HepG2 (cell line): ENCODE measurements at regions of chr14 and their contacts with region 1.

Region 1: GRCh38 chr14:102539580-102540314 is 30.2 kb upstream of the ANKRD9 start:
- DNase-seq: peak; percentile 86
- ATAC-seq: peak; percentile 42
- H3K4me3 ChIP-seq: peak overlapping the region; percentile 60 to 80 (median 78)
- H3K27ac ChIP-seq: peak overlapping the region; percentile 93
- H3K4me1 ChIP-seq: peaks cover 82% of the 10 kb centered on the region
- H3K27me3 ChIP-seq: no peaks in the 10 kb centered on the region; a peak in 1 of 5 replicates
- CTCF ChIP-seq: 0 out of 2 replicates have a peak, but pooled peaks have one; percentile 2
- EP300 ChIP-seq: no peak
- POLR2A ChIP-seq: peak; percentile 73 to 81
- RAD21 ChIP-seq: no peak

Region 2: DNA sequence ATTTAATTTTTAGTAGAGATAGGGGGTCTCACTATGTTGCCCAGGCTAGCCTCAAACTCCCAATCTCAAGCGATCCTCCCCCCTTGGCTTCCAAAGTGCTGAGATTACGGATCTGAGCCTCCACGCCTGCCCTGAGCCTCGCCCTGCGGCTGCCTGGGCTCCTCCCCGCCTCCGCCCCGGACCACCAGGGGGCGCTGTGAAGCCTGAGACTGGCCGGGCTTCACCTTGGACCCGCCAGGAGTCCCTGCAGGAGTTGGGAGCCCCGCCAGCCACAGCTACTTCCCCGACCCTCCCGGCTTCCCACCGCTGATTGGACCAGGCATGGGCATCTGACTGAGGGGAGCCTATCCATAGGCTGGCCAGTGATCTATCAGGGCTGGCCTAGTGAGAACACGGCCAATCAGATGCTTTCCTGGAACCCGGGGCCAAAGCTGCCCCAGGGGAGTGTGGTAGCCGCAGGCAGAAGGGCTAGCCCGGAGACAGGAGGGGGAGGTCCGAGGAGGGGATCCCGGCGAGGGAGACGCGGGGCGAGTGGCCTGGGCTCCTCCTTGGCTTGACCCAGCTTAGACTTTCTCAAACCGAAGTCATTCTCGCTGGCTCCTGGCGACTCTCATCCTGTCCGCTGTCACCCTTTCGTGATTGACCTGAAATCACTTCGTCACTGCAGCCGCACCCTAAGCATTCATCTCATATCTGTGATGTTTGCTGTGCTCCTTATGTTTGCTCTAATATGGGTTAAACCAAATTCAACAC is 15.1 kb before region 1 on chr14:
- CTCF ChIA-PET with region 1: no interaction called
- POLR2A ChIA-PET with region 1: interaction called, 102 read pairs
- in situ Hi-C with region 1: no loop called
- intact Hi-C with region 1: no loop called
- DNase-seq: peak; percentile 96
- ATAC-seq: peak; percentile 99
- H3K4me3 ChIP-seq: peak overlapping the region; percentile 72 to 81 (median 75)
- H3K27ac ChIP-seq: peak overlapping the region; percentile 57
- H3K4me1 ChIP-seq: peaks cover 38% of the 10 kb centered on the region
- H3K27me3 ChIP-seq: no peaks in the 10 kb centered on the region; a peak in 1 of 5 replicates
- CTCF ChIP-seq: peak; percentile 99
- EP300 ChIP-seq: no peak
- POLR2A ChIP-seq: peak; percentile 79 to 97
- RAD21 ChIP-seq: peak; percentile 98

Region 3: GRCh38 chr14:102557434-102558226 is 17.9 kb after region 1 on chr14:
- CTCF ChIA-PET with region 1: no interaction called
- POLR2A ChIA-PET with region 1: interaction called, 16 read pairs
- in situ Hi-C with region 1: no loop called
- intact Hi-C with region 1: no loop called
- DNase-seq: no peak
- ATAC-seq: peak; percentile 6; the same call in 1 of the 3 replicates
- H3K4me3 ChIP-seq: no peak overlapping the region
- H3K27ac ChIP-seq: no peak overlapping the region
- H3K4me1 ChIP-seq: peaks cover 21% of the 10 kb centered on the region
- H3K27me3 ChIP-seq: no peaks in the 10 kb centered on the region; a peak in 1 of 5 replicates
- CTCF ChIP-seq: no peak
- EP300 ChIP-seq: no peak
- POLR2A ChIP-seq: no peak
- RAD21 ChIP-seq: no peak

Region 4: DNA sequence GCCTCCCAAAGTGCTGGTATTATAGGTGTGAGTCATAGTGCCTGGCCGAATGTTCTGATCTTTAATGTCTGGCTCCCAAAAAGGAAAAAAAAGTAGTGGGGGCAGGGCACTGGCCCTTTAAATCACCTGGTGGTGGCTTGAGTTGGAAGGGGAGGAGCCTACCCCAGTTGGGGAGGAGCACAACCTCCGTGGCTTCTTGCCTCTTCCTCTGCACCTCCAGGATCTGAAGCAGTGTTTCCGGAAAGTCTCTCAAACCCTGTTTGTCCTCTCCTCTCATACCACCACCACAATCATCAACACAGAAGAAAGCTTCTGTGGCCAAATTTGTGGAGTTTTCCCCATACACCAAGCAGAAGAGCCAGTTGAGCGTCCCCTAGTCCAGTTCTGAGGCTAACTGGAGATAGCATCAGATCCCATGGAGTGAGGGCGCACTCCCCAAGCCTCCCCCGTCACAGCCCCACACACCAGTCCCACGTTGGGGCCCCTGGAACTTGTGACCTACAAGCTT is 28.4 kb after region 1 on chr14:
- CTCF ChIA-PET with region 1: no interaction called
- POLR2A ChIA-PET with region 1: interaction called, 26 read pairs
- in situ Hi-C with region 1: no loop called
- intact Hi-C with region 1: no loop called
- DNase-seq: peak; percentile 52
- ATAC-seq: peak; percentile 74
- H3K4me3 ChIP-seq: peak overlapping the region; percentile 28 to 52 (median 51); a peak in 5 of 6 replicates
- H3K27ac ChIP-seq: peak overlapping the region; percentile 58
- H3K4me1 ChIP-seq: peaks cover 76% of the 10 kb centered on the region
- H3K27me3 ChIP-seq: no peaks in the 10 kb centered on the region
- CTCF ChIP-seq: no peak
- EP300 ChIP-seq: 0 out of 4 replicates have a peak, but pooled peaks of 1 of the 2 experiments have one; percentile 14
- POLR2A ChIP-seq: peak; percentile 37 to 72; a peak in 2 of 4 replicates
- RAD21 ChIP-seq: no peak

Region 5: GRCh38 chr14:102573591-102574046 is 33.9 kb after region 1 on chr14:
- CTCF ChIA-PET with region 1: no interaction called
- POLR2A ChIA-PET with region 1: interaction called, 66 read pairs
- in situ Hi-C with region 1: no loop called
- intact Hi-C with region 1: no loop called
- DNase-seq: no peak
- ATAC-seq: no peak
- H3K4me3 ChIP-seq: no peak overlapping the region
- H3K27ac ChIP-seq: peak overlapping the region; percentile 40
- H3K4me1 ChIP-seq: peaks cover 83% of the 10 kb centered on the region
- H3K27me3 ChIP-seq: no peaks in the 10 kb centered on the region
- CTCF ChIP-seq: no peak
- EP300 ChIP-seq: no peak
- POLR2A ChIP-seq: no peak
- RAD21 ChIP-seq: no peak

Region 6: DNA sequence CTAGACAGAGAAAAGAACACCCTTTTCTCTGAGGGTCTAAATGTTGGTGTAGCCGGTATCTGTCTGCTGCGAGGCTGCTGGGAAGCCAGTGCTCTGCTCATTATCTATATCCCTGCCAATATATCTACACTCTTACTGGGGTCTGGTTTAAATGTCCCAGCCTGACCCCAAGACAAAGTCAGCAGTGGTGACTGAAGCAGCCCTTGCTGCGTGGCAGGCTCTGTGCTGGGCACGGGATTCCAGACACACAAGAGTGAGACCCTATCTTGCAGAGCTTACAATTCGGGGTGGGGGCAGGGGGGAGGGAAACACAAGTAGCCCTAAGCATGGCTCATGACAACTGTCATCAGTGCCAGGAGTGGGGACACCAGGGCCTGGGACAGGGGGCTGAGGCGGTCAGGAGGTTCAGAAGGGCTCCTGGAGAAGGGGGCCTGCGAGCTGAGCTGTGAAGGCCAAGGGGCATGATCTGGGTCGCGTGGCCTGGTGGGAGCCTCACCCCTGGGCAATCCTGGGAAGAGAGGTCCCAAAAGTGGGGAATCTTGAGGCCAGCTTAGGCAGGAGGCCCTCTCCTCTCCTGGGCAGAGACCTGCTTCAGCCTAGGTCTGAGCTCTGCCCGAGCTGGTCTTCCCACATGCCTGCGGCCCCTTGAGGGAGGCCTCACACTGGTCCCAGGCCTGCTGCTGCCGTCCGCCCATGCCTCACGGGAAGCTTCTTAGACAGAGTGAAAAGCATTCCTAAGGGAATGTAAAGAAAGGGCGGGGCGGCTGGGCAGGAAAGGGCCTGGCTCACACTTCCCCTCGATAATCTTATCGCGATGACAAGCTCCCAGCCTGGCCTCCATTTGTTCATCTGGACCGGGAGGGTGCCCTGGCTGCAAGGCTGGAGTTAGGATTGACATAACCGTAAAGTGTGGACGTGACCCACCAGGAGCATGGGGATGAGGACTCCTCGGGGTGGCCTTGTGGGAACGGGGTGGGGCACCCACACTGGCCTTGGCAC is 45.4 kb after region 1 on chr14:
- CTCF ChIA-PET with region 1: no interaction called
- POLR2A ChIA-PET with region 1: interaction called, 10 read pairs
- in situ Hi-C with region 1: loop called (anchors 5 kb)
- intact Hi-C with region 1: no loop called
- DNase-seq: no peak
- ATAC-seq: peak; percentile 81
- H3K4me3 ChIP-seq: peak overlapping the region in 2 of 3 experiments; percentile 13 to 58; a peak in 4 of 6 replicates
- H3K27ac ChIP-seq: no peak overlapping the region
- H3K4me1 ChIP-seq: peaks cover 76% of the 10 kb centered on the region
- H3K27me3 ChIP-seq: no peaks in the 10 kb centered on the region
- CTCF ChIP-seq: no peak
- EP300 ChIP-seq: no peak
- POLR2A ChIP-seq: no peak
- RAD21 ChIP-seq: no peak

Region 7: GRCh38 chr14:102591889-102592763 is 52.4 kb after region 1 on chr14 and contains the start of gene RCOR1:
- CTCF ChIA-PET with region 1: no interaction called
- POLR2A ChIA-PET with region 1: interaction called, 58 read pairs
- in situ Hi-C with region 1: loop called (anchors 5 kb)
- intact Hi-C with region 1: loop called (anchors 2 kb)
- DNase-seq: peak; percentile 89
- ATAC-seq: peak; percentile 77
- H3K4me3 ChIP-seq: peak within 1 kb of the TSS; percentile 94 to 97 (median 94)
- H3K27ac ChIP-seq: peak within 1 kb of the TSS; percentile 99
- H3K4me1 ChIP-seq: peaks cover 48% of the 10 kb centered on the region
- H3K27me3 ChIP-seq: no peaks in the 10 kb centered on the region; a peak in 1 of 5 replicates
- CTCF ChIP-seq: no peak
- EP300 ChIP-seq: no peak
- POLR2A ChIP-seq: peak; percentile 85 to 94
- RAD21 ChIP-seq: peak; percentile 58; the same call in 1 of the 2 replicates
- total RNA-seq, gene RCOR1: 11.1 and 14.8 TPM in 2 replicates

Region 8: DNA sequence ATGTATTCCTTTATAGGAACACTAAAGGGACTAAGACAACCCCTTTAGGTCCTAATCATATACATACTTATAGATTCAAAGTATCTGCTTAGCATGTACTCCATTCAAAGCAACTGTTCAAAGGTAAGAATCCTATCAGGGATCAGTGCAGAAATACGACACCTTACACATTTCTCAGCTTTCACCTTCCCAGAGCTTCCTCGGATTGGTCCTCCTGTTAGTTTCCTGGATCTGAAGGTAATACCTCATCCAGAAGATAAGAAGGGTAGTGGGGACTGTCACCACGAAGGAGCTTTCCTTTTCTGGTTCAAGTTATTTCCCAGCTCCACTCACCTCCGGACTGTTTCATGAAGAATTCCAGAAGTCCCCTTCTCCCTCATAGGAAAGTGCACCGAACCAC is 90.7 kb after region 1 on chr14:
- CTCF ChIA-PET with region 1: no interaction called
- POLR2A ChIA-PET with region 1: no interaction called
- in situ Hi-C with region 1: no loop called
- intact Hi-C with region 1: no loop called
- DNase-seq: no peak
- ATAC-seq: no peak; the same call in 2 of the 3 replicates
- H3K4me3 ChIP-seq: no peak overlapping the region
- H3K27ac ChIP-seq: no peak overlapping the region
- H3K4me1 ChIP-seq: peaks cover 35% of the 10 kb centered on the region
- H3K27me3 ChIP-seq: no peaks in the 10 kb centered on the region
- CTCF ChIP-seq: no peak
- EP300 ChIP-seq: no peak
- POLR2A ChIP-seq: no peak
- RAD21 ChIP-seq: no peak